Naive thymus-derived CD4-positive, alpha-beta T cell (primary cell): ENCODE measurements at regions of chr10 and their contacts with region 1.

Region 1: DNA sequence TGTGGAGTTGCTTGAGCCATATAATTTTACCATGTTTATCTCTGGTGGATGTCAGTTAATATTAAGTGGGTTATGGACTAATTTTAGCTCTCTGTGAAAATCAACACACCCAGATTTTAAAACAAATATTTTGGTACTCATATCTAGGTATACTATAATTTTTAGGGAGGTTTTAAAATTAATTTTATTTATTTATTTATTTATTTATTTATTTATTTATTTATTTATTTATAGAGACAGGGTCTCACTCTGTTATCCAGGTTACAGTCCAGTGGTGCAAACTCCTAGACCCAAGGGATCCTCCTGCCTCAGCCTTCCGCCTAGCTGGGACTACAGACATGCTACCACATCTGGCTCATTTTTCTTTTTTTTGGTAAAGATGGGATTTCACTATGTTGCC is 7.3 kb upstream of the CREM start:
- DNase-seq: no peak
- ATAC-seq: no peak
- H3K4me3 ChIP-seq: no peak overlapping the region
- H3K4me3 Mint-ChIP-seq: no peak overlapping the region
- H3K27ac ChIP-seq: no peak overlapping the region
- H3K27ac Mint-ChIP-seq: peak overlapping the region in 1 of 9 donors; percentile 52
- H3K4me1 ChIP-seq: no peaks in the 10 kb centered on the region
- H3K4me1 Mint-ChIP-seq: peaks cover 0 to 13% (median 0%) of the 10 kb centered on the region in 7 donors
- H3K27me3 ChIP-seq: no peaks in the 10 kb centered on the region
- H3K27me3 Mint-ChIP-seq: peaks cover 0 to 10% (median 0%) of the 10 kb centered on the region in 5 donors

Region 2: GRCh38 chr10:35208536-35208935 is 89.2 kb after region 1 on chr10:
- CTCF ChIA-PET with region 1: interaction called, 12 read pairs
- POLR2A ChIA-PET with region 1: no interaction called
- intact Hi-C with region 1: no loop called
- DNase-seq: peak in 1 of 9 donors; percentile 41
- ATAC-seq: peak; percentile 46
- H3K4me3 ChIP-seq: no peak overlapping the region
- H3K4me3 Mint-ChIP-seq: peak overlapping the region in 2 of 10 donors; percentile 9 to 85
- H3K27ac ChIP-seq: no peak overlapping the region
- H3K27ac Mint-ChIP-seq: peak overlapping the region in 5 of 9 donors; percentile 28 to 96 (median 54)
- H3K4me1 ChIP-seq: no peaks in the 10 kb centered on the region
- H3K4me1 Mint-ChIP-seq: peaks cover 0 to 60% (median 0%) of the 10 kb centered on the region in 7 donors
- H3K27me3 ChIP-seq: no peaks in the 10 kb centered on the region
- H3K27me3 Mint-ChIP-seq: no peaks in the 10 kb centered on the region